ENCODE measurements at regions of chr7 and their contacts with region 1.

Region 1: DNA sequence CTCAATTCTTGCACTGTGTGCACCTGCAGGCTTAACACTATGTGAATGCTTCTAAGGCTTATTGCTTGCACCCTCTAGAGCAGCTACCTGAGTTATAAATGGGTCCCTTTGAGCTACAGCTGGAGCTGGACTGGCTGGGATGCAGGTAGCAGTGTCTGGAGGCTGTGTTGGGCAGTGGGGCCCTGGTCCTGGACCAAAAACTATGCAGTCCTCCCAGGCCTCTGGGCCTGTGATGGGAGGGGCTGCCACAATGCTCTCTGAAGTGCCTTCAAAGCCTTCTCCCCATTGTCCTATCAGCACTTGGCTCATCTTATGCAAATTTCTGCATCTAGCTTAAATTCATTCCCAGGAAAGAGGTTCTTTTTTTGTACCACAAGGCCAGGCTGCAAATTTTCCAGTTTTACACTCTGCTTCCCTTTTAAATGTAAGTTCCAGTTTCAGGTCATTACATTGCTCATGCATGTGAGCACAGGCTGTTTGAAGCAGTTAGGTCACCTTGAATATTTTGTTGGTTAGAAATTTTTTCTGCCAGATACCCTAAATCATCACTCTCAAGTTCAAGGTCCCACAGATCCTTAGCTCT is 26.0 kb downstream of the KBTBD2 start:
- DNase-seq: no peak
- H3K4me3 ChIP-seq: no peak overlapping the region
- H3K27ac ChIP-seq: no peak overlapping the region
- H3K4me1 ChIP-seq: no peaks in the 10 kb centered on the region
- H3K27me3 ChIP-seq: no peaks in the 10 kb centered on the region
- CTCF ChIP-seq: no peak

Region 2: DNA sequence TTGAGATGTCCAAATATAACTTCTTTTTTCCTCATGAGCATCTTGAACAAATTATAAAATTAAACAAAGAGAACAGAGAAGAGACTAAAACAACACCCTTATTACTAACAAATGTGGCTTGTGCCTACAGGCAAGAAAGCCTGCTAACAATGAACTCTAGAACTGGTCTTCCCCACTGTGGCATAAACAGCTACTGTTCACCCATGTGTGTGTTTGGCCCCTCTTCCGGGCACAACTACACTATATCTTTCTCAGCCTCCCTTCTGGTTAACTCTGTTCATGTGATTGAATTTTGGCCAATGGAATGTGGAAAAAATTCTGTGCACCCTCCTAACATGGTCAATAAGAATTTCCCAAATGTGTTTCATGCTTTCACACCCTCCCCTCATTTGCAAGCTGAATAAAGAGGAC is 91.0 kb before region 1 on chr7:
- CTCF ChIA-PET with region 1: no interaction called
- POLR2A ChIA-PET with region 1: no interaction called
- intact Hi-C with region 1: no loop called
- DNase-seq: no peak
- H3K4me3 ChIP-seq: no peak overlapping the region
- H3K27ac ChIP-seq: no peak overlapping the region
- H3K4me1 ChIP-seq: peaks cover 13% of the 10 kb centered on the region
- H3K27me3 ChIP-seq: no peaks in the 10 kb centered on the region
- CTCF ChIP-seq: no peak

Region 3: GRCh38 chr7:32879460-32879859 is 13.9 kb after region 1 on chr7:
- CTCF ChIA-PET with region 1: no interaction called
- POLR2A ChIA-PET with region 1: interaction called, 12 read pairs
- intact Hi-C with region 1: no loop called
- DNase-seq: peak; percentile 16
- H3K4me3 ChIP-seq: no peak overlapping the region
- H3K27ac ChIP-seq: peak overlapping the region; percentile 32
- H3K4me1 ChIP-seq: peaks cover 42% of the 10 kb centered on the region
- H3K27me3 ChIP-seq: no peaks in the 10 kb centered on the region
- CTCF ChIP-seq: no peak

Measured in A673 (cell line).